ENCODE measurements at regions of chr2 and their contacts with region 1.

Region 1: GRCh38 chr2:108129636-108130035 is 110.1 kb upstream of the SULT1C3 start:
- DNase-seq: no peak

Region 2: GRCh38 chr2:108154371-108155061 is 24.9 kb after region 1 on chr2:
- intact Hi-C with region 1: loop called in 1 of 2 experiments (anchors 2 kb)
- DNase-seq: no peak